Activated naive CD4-positive, alpha-beta T cell treated with anti-CD3 and anti-CD28 coated beads for 36 hours (primary cell): ENCODE measurements at regions of chr1 and their contacts with region 1.

Region 1: DNA sequence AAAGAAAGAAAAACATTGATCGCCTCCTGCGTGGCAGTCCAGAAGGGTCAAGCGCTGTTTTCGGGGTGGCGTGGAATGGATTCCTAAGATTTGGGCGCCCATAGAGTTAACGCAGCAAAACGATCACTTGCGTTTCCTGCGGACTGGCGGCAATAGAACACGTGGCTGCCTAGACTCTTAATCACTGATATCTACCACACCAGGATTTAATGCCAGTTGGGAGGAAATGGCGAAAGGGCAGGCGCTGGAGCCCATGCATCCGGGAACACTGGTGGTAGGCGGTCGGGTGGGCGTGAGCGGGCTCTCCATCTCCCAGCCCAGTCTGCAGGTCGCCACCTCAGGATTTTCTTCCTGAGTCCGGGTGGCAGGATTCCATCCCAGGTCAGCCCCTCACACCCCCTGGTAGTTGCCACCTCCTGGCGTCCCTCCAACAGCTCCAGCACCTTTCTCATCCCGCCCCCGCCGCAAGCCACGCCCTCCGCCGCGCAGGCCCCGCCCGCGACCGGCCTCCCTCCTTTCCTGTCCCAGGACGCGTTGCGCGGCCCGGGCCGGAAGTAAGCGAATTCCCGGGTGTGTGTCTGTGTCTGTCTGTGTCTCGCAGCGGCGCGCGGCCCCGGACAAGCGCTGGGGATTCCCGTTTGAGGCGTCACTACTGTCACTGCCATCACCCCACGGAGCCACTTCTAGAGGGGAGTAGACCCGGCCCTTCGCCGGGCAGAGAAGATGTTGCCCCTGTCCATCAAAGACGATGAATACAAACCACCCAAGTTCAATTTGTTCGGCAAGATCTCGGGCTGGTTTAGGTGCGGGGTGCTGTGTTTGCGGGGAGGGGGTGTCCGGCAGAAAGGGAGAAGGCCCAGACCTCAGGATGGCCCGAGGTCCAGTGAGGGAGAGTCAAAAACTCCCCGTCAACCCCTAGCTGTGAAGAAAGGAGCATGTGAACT is at the start of gene SLC30A7:
- DNase-seq: peak; percentile 98
- H3K4me3 Mint-ChIP-seq: peak within 1 kb of the TSS; percentile 100
- H3K27ac Mint-ChIP-seq: peak within 1 kb of the TSS; percentile 100
- H3K4me1 Mint-ChIP-seq: peaks cover 37% of the 10 kb centered on the region
- H3K27me3 Mint-ChIP-seq: no peaks in the 10 kb centered on the region
- total RNA-seq, gene SLC30A7: 32.4 to 32.6 TPM

Region 2: GRCh38 chr1:100132566-100133477 is 763.0 kb before region 1 on chr1 and contains the starts of genes SASS6 and TRMT13:
- CTCF ChIA-PET with region 1: no interaction called
- intact Hi-C with region 1: loop called (anchors 2 kb)
- DNase-seq: peak; percentile 97
- H3K4me3 Mint-ChIP-seq: peak within 1 kb of the TSS; percentile 91
- H3K27ac Mint-ChIP-seq: peak within 1 kb of the TSS; percentile 87
- H3K4me1 Mint-ChIP-seq: peaks cover 37% of the 10 kb centered on the region
- H3K27me3 Mint-ChIP-seq: no peaks in the 10 kb centered on the region
- total RNA-seq, gene SASS6: 8.2 TPM
- total RNA-seq, gene TRMT13: 12.9 to 16.6 TPM

Region 3: GRCh38 chr1:100400404-100400803 is 495.4 kb before region 1 on chr1:
- CTCF ChIA-PET with region 1: no interaction called
- intact Hi-C with region 1: loop called (anchors 5 kb)
- DNase-seq: peak; percentile 73
- H3K4me3 Mint-ChIP-seq: peak overlapping the region; percentile 60
- H3K27ac Mint-ChIP-seq: peak overlapping the region; percentile 94
- H3K4me1 Mint-ChIP-seq: peaks cover 75% of the 10 kb centered on the region
- H3K27me3 Mint-ChIP-seq: no peaks in the 10 kb centered on the region

Region 4: GRCh38 chr1:100510451-100510850 is 385.4 kb before region 1 on chr1:
- CTCF ChIA-PET with region 1: no interaction called
- intact Hi-C with region 1: no loop called
- DNase-seq: no peak
- H3K4me3 Mint-ChIP-seq: no peak overlapping the region
- H3K27ac Mint-ChIP-seq: no peak overlapping the region
- H3K4me1 Mint-ChIP-seq: no peaks in the 10 kb centered on the region
- H3K27me3 Mint-ChIP-seq: no peaks in the 10 kb centered on the region

Region 5: GRCh38 chr1:100921109-100921706 is 25.4 kb after region 1 on chr1:
- CTCF ChIA-PET with region 1: interaction called, 3 read pairs
- intact Hi-C with region 1: loop called (anchors 1 kb)
- DNase-seq: no peak
- H3K4me3 Mint-ChIP-seq: no peak overlapping the region
- H3K27ac Mint-ChIP-seq: peak overlapping the region; percentile 39
- H3K4me1 Mint-ChIP-seq: peaks cover 16% of the 10 kb centered on the region
- H3K27me3 Mint-ChIP-seq: no peaks in the 10 kb centered on the region

Region 6: GRCh38 chr1:100928128-100928527 is 32.3 kb after region 1 on chr1:
- CTCF ChIA-PET with region 1: no interaction called
- intact Hi-C with region 1: loop called (anchors 1 kb)
- DNase-seq: peak; percentile 49
- H3K4me3 Mint-ChIP-seq: no peak overlapping the region
- H3K27ac Mint-ChIP-seq: no peak overlapping the region
- H3K4me1 Mint-ChIP-seq: peaks cover 30% of the 10 kb centered on the region
- H3K27me3 Mint-ChIP-seq: no peaks in the 10 kb centered on the region

Region 7: GRCh38 chr1:101025657-101026504 is 130.1 kb after region 1 on chr1 and contains the start of gene DPH5:
- CTCF ChIA-PET with region 1: no interaction called
- intact Hi-C with region 1: loop called (anchors 1 kb)
- DNase-seq: peak; percentile 92
- H3K4me3 Mint-ChIP-seq: peak within 1 kb of the TSS; percentile 99
- H3K27ac Mint-ChIP-seq: peak within 1 kb of the TSS; percentile 98
- H3K4me1 Mint-ChIP-seq: peaks cover 58% of the 10 kb centered on the region
- H3K27me3 Mint-ChIP-seq: no peaks in the 10 kb centered on the region
- total RNA-seq, gene DPH5: 61.7 to 66.3 TPM

Region 8: GRCh38 chr1:101282314-101283038 is 386.7 kb after region 1 on chr1:
- CTCF ChIA-PET with region 1: no interaction called
- intact Hi-C with region 1: no loop called
- DNase-seq: no peak
- H3K4me3 Mint-ChIP-seq: no peak overlapping the region
- H3K27ac Mint-ChIP-seq: no peak overlapping the region
- H3K4me1 Mint-ChIP-seq: peaks cover 90% of the 10 kb centered on the region
- H3K27me3 Mint-ChIP-seq: no peaks in the 10 kb centered on the region

Region 9: DNA sequence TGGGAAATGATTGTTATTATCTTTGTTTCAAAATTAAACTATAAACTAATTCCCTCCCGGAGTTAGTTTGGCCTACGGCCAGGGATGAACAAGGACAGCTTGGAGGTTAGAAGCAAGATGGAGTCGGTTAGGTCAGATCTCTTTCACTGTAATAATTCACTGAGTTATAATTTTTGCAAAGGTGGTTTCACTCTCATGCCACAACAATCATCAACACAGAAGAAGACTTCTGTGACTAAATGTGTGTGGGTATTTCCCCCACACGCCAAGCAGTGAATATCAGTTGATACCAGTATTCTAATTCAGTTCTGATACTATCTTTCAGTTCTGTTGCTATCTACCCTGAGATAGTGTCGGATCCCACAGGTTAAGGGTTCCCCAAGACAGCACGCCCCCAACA is 556.1 kb after region 1 on chr1:
- CTCF ChIA-PET with region 1: no interaction called
- intact Hi-C with region 1: loop called (anchors 5 kb)
- DNase-seq: peak; percentile 48
- H3K4me3 Mint-ChIP-seq: no peak overlapping the region
- H3K27ac Mint-ChIP-seq: no peak overlapping the region
- H3K4me1 Mint-ChIP-seq: peaks cover 40% of the 10 kb centered on the region
- H3K27me3 Mint-ChIP-seq: peaks cover 3% of the 10 kb centered on the region

Region 10: DNA sequence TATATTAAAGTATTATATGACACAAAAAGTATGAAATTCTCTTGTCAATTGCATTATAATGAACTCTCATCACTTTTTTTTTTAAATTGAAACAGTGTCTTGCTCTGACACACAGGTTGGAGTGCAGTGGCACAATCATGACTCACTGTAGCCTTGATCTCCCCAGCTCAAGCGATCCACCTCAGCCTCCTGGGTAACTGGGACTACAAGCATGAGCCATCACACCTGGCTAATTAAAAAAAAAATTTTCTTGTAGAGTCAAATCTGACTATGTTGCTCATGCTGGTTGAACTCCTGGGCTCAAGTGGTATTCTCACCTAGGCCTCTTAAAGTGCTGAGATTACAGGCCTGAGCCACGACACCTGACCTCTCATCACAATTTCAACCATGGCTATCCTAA is 600.3 kb after region 1 on chr1:
- CTCF ChIA-PET with region 1: no interaction called
- intact Hi-C with region 1: no loop called
- DNase-seq: peak; percentile 32
- H3K4me3 Mint-ChIP-seq: no peak overlapping the region
- H3K27ac Mint-ChIP-seq: no peak overlapping the region
- H3K4me1 Mint-ChIP-seq: peaks cover 2% of the 10 kb centered on the region
- H3K27me3 Mint-ChIP-seq: no peaks in the 10 kb centered on the region